ENCODE measurements at regions of chr11 and their contacts with region 1.

Region 1: GRCh38 chr11:3642071-3642951 is 519 bp upstream of the ART5 start:
- DNase-seq: peak; percentile 91 to 96
- ATAC-seq: peak; percentile 67
- H3K4me3 ChIP-seq: peak overlapping the region; percentile 67 to 88 (median 78)
- H3K27ac ChIP-seq: peak overlapping the region; percentile 97 to 100 (median 98)
- H3K4me1 ChIP-seq: peaks cover 32 to 47% of the 10 kb centered on the region in 2 donors
- H3K27me3 ChIP-seq: no peaks in the 10 kb centered on the region
- CTCF ChIP-seq: no peak
- POLR2A ChIP-seq: peak; percentile 88 to 95

Region 2: GRCh38 chr11:3614742-3615171 is 27.6 kb before region 1 on chr11:
- in situ Hi-C with region 1: no loop called
- intact Hi-C with region 1: loop called (anchors 1 kb)
- DNase-seq: peak; percentile 91 to 94
- ATAC-seq: peak; percentile 88
- H3K4me3 ChIP-seq: peak overlapping the region; percentile 31 to 48 (median 41)
- H3K27ac ChIP-seq: peak overlapping the region; percentile 91 to 99 (median 94)
- H3K4me1 ChIP-seq: peaks cover 19 to 27% of the 10 kb centered on the region in 2 donors
- H3K27me3 ChIP-seq: no peaks in the 10 kb centered on the region
- CTCF ChIP-seq: no peak
- POLR2A ChIP-seq: peak; percentile 66 to 85

Region 3: GRCh38 chr11:3709977-3710376 is 67.7 kb after region 1 on chr11:
- in situ Hi-C with region 1: no loop called
- intact Hi-C with region 1: loop called (anchors 2 kb)
- DNase-seq: peak; percentile 81 to 85
- ATAC-seq: peak; percentile 94 to 96
- H3K4me3 ChIP-seq: no peak overlapping the region
- H3K27ac ChIP-seq: peak overlapping the region; percentile 83 to 91 (median 86)
- H3K4me1 ChIP-seq: peaks cover 52% of the 10 kb centered on the region in 2 donors
- H3K27me3 ChIP-seq: no peaks in the 10 kb centered on the region
- CTCF ChIP-seq: no peak
- POLR2A ChIP-seq: no peak